ENCODE measurements at regions of chr10 and their contacts with region 1.

Region 1: DNA sequence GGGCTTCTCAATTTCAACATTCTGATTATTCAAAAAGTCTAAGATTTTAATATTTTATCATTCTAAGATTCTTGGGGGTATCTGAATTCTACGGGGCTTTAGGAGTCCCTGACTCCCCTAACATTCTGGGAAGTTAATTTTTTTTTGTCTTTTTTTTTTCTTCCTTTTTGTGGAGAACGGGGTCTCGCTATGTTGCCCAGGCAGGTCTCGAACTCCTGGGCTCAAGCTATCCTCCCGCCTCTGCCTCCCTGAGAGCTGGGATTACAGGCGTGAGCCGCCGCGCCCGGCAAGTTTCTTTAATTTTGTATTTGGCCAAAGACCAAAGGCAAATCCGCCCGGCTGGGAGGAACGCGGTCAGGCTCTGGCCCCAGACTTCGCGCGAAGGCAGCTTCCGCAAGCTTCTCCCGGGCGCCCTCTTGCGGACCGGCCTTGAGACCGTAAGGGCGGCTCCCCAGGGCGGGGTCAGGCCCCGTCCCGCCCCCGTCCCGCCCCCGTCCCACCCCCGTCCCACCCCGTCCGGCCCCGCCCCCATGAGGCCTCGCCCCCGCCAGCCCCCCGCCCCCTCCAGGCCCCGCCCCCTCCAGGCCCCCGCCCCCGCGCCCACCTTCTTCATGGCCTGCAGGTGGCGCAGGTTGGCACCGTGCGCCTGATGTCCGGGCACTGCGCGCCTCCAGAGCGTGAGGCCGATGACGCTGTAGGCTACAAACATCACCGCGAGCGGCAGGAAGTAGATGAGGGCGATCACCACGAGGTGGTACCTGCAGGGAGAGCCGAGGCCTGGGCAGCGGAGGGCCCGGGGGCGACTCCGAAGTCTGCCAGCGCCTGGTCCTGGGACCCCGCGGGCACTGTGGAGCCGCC is 8.2 kb downstream of the TACR2 start:
- DNase-seq: peak; percentile 87 to 93 (median 88)
- H3K4me3 ChIP-seq: no peak overlapping the region
- H3K4me3 Mint-ChIP-seq: peak overlapping the region in 6 of 7 donors; percentile 60 to 80 (median 74)
- H3K27ac ChIP-seq: peak overlapping the region; percentile 64
- H3K27ac Mint-ChIP-seq: peak overlapping the region; percentile 63 to 94 (median 88)
- H3K4me1 ChIP-seq: peaks cover 15% of the 10 kb centered on the region
- H3K4me1 Mint-ChIP-seq: peaks cover 11 to 26% (median 19%) of the 10 kb centered on the region in 3 donors
- H3K27me3 ChIP-seq: no peaks in the 10 kb centered on the region
- H3K27me3 Mint-ChIP-seq: peaks cover 0 to 3% of the 10 kb centered on the region in 2 donors

Region 2: GRCh38 chr10:69237528-69238159 is 170.9 kb before region 1 on chr10:
- CTCF ChIA-PET with region 1: interaction called, 11 read pairs
- POLR2A ChIA-PET with region 1: no interaction called
- DNase-seq: peak; percentile 66 to 87 (median 78)
- H3K4me3 ChIP-seq: no peak overlapping the region
- H3K4me3 Mint-ChIP-seq: no peak overlapping the region
- H3K27ac ChIP-seq: no peak overlapping the region
- H3K27ac Mint-ChIP-seq: peak overlapping the region in 2 of 8 donors; percentile 6 to 8
- H3K4me1 ChIP-seq: peaks cover 20% of the 10 kb centered on the region
- H3K4me1 Mint-ChIP-seq: peaks cover 12 to 21% (median 16%) of the 10 kb centered on the region in 3 donors
- H3K27me3 ChIP-seq: no peaks in the 10 kb centered on the region
- H3K27me3 Mint-ChIP-seq: peaks cover 0 to 2% of the 10 kb centered on the region in 2 donors

Region 3: GRCh38 chr10:69379800-69380199 is 28.7 kb before region 1 on chr10:
- CTCF ChIA-PET with region 1: no interaction called
- POLR2A ChIA-PET with region 1: no interaction called
- DNase-seq: no peak
- H3K4me3 ChIP-seq: no peak overlapping the region
- H3K4me3 Mint-ChIP-seq: no peak overlapping the region
- H3K27ac ChIP-seq: no peak overlapping the region
- H3K27ac Mint-ChIP-seq: peak overlapping the region in 3 of 8 donors; percentile 16 to 58 (median 21)
- H3K4me1 ChIP-seq: no peaks in the 10 kb centered on the region
- H3K4me1 Mint-ChIP-seq: peaks cover 0 to 3% (median 0%) of the 10 kb centered on the region in 3 donors
- H3K27me3 ChIP-seq: no peaks in the 10 kb centered on the region
- H3K27me3 Mint-ChIP-seq: no peaks in the 10 kb centered on the region

Region 4: GRCh38 chr10:69392481-69393000 is 16.0 kb before region 1 on chr10:
- CTCF ChIA-PET with region 1: interaction called, 21 read pairs
- POLR2A ChIA-PET with region 1: interaction called, 4 read pairs
- DNase-seq: peak; percentile 62 to 86 (median 73)
- H3K4me3 ChIP-seq: no peak overlapping the region
- H3K4me3 Mint-ChIP-seq: no peak overlapping the region
- H3K27ac ChIP-seq: no peak overlapping the region
- H3K27ac Mint-ChIP-seq: peak overlapping the region; percentile 74 to 92 (median 84)
- H3K4me1 ChIP-seq: peaks cover 13% of the 10 kb centered on the region
- H3K4me1 Mint-ChIP-seq: peaks cover 11 to 15% (median 13%) of the 10 kb centered on the region in 3 donors
- H3K27me3 ChIP-seq: no peaks in the 10 kb centered on the region
- H3K27me3 Mint-ChIP-seq: no peaks in the 10 kb centered on the region

Region 5: DNA sequence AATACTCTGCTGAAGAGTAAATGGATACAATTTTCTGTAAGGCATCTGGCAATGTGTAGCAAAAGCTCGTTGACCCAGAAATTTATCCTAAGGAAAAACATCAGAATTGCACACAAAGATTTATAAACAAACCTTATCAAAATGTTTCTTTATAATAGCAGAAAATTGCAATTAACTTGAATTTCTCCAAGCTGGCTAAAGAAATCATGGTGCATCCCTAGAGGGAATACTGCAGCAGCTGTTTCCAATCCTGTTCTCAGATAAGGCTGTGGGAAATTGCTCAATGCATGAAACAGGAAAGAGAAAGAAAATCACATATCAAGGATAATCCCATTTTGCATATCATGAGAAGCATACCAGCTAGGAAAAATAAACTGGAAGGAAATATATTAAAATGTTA is 10.6 kb before region 1 on chr10:
- CTCF ChIA-PET with region 1: interaction called, 21 read pairs
- POLR2A ChIA-PET with region 1: interaction called, 4 read pairs
- DNase-seq: no peak
- H3K4me3 ChIP-seq: no peak overlapping the region
- H3K4me3 Mint-ChIP-seq: no peak overlapping the region
- H3K27ac ChIP-seq: no peak overlapping the region
- H3K27ac Mint-ChIP-seq: no peak overlapping the region
- H3K4me1 ChIP-seq: no peaks in the 10 kb centered on the region
- H3K4me1 Mint-ChIP-seq: no peaks in the 10 kb centered on the region
- H3K27me3 ChIP-seq: no peaks in the 10 kb centered on the region
- H3K27me3 Mint-ChIP-seq: no peaks in the 10 kb centered on the region

Region 6: GRCh38 chr10:69425511-69426298 is 17.2 kb after region 1 on chr10:
- CTCF ChIA-PET with region 1: interaction called, 12 read pairs
- POLR2A ChIA-PET with region 1: no interaction called
- DNase-seq: peak; percentile 7 to 65 (median 56)
- H3K4me3 ChIP-seq: no peak overlapping the region
- H3K4me3 Mint-ChIP-seq: peak overlapping the region in 6 of 7 donors; percentile 7 to 57 (median 22)
- H3K27ac ChIP-seq: peak overlapping the region; percentile 17
- H3K27ac Mint-ChIP-seq: peak overlapping the region; percentile 1 to 92 (median 82)
- H3K4me1 ChIP-seq: peaks cover 40% of the 10 kb centered on the region
- H3K4me1 Mint-ChIP-seq: peaks cover 46 to 55% (median 51%) of the 10 kb centered on the region in 3 donors
- H3K27me3 ChIP-seq: no peaks in the 10 kb centered on the region
- H3K27me3 Mint-ChIP-seq: peaks cover 0 to 5% of the 10 kb centered on the region in 2 donors

Region 7: DNA sequence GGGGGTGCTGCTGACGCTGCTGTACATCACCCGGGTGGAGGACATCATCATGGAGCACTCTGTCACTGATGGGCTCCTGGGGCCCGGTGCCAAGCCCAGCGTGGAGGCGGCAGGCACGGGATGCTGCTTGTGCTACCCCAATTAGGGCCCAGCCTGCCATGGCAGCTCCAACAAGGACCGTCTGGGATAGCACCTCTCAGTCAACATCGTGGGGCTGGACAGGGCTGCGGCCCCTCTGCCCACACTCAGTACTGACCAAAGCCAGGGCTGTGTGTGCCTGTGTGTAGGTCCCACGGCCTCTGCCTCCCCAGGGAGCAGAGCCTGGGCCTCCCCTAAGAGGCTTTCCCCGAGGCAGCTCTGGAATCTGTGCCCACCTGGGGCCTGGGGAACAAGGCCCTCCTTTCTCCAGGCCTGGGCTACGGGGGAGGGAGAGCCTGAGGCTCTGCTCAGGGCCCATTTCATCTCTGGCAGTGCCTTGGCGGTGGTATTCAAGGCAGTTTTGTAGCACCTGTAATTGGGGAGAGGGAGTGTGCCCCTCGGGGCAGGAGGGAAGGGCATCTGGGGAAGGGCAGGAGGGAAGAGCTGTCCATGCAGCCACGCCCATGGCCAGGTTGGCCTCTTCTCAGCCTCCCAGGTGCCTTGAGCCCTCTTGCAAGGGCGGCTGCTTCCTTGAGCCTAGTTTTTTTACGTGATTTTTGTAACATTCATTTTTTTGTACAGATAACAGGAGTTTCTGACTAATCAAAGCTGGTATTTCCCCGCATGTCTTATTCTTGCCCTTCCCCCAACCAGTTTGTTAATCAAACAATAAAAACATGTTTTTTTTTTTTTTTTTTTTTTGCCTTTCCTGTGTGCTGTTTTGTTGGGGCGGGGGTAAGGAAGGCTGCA is 98.5 kb after region 1 on chr10:
- CTCF ChIA-PET with region 1: interaction called, 41 read pairs
- POLR2A ChIA-PET with region 1: no interaction called
- DNase-seq: no peak
- H3K4me3 ChIP-seq: peak overlapping the region; percentile 57
- H3K4me3 Mint-ChIP-seq: peak overlapping the region; percentile 0 to 82 (median 74)
- H3K27ac ChIP-seq: no peak overlapping the region
- H3K27ac Mint-ChIP-seq: peak overlapping the region; percentile 24 to 97 (median 83)
- H3K4me1 ChIP-seq: peaks cover 12% of the 10 kb centered on the region
- H3K4me1 Mint-ChIP-seq: peaks cover 9 to 12% (median 11%) of the 10 kb centered on the region in 3 donors
- H3K27me3 ChIP-seq: no peaks in the 10 kb centered on the region
- H3K27me3 Mint-ChIP-seq: peaks cover 0 to 2% of the 10 kb centered on the region in 2 donors

Region 8: DNA sequence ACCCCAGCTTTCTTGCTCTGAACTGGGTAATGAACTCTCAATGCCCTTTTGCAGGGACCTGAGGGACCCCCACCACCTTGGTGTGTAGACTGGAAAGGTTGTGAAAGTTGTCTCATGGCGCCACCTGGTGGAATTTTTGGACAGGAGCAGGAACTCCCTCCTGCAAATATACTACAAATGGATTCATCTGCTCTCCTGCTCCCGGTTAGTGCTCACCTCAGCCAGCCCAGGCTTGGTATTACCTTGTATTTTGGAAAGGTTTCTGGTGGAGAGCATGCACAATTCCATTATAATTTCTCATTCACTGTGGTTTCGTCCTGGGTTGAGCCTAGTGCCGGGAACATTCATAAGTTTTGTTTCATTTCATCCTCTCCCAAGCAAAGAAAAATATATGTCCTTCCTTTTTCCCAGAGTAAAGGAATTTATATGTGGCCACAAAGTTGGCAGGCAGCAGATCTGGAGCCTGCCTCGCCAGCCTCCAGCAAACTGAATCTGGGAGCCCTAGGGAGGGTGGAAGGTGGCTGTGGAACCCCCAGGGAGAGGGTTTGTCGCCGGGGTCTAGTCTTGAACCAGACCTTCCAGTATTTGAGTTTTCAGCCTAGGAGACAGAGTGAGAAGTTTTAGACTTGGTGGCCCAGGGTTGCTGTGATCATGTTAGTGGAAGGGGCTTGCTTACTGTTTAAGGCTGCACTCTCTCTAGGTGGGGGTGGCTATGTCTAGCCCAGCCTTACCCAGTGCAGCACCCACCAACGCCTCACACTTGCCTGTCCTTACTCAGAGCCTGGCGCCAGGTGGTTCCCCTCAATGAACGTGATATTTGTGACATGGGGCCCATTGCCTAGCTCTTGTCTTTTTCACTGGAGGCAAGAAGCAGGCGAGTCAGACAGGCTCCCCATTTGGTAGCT is 231.0 kb after region 1 on chr10:
- CTCF ChIA-PET with region 1: interaction called, 12 read pairs
- POLR2A ChIA-PET with region 1: no interaction called
- DNase-seq: peak; percentile 54 to 75 (median 58)
- H3K4me3 ChIP-seq: no peak overlapping the region
- H3K4me3 Mint-ChIP-seq: no peak overlapping the region
- H3K27ac ChIP-seq: no peak overlapping the region
- H3K27ac Mint-ChIP-seq: peak overlapping the region in 1 of 8 donors; percentile 58
- H3K4me1 ChIP-seq: no peaks in the 10 kb centered on the region
- H3K4me1 Mint-ChIP-seq: peaks cover 0 to 3% (median 0%) of the 10 kb centered on the region in 3 donors
- H3K27me3 ChIP-seq: no peaks in the 10 kb centered on the region
- H3K27me3 Mint-ChIP-seq: peaks cover 3 to 4% of the 10 kb centered on the region in 2 donors